AG04450 (cell line): ENCODE measurements at regions of chr6 and their contacts with region 1.

Region 1: DNA sequence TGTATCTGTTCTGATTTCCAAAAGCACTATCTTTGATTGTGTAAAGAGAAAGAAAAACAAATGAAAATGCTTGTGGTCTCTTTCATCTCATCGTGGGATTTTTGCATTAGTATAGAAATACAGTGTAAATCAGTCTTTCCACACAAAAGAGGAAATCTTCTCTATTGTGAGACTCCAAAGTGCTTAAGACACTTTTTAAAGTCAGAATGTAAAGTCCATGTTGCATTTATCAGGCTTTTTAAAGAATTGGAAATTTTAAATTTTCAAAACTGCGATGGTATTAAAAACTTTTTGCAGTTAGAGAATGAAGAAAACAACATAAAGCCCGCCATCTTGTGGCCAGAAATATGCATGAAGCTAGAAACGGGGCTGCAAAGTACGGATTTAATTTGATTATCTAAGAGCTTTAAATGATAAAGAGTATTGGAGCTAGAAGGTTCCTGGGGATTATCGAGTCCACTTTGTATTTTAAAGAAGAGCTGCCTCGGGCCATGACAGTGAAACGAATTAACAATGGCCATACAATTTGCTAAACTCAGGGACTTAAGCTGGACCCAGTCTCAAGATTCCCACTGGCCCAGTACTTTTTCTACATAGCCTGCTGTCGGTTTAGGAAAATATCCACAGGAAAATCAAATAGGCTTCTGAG is 339.6 kb downstream of the ARHGAP18 start:
- DNase-seq: peak; percentile 18
- H3K4me3 ChIP-seq: no peak overlapping the region; the same call in 1 of the 2 replicates
- H3K27ac ChIP-seq: no peak overlapping the region
- H3K27me3 ChIP-seq: no peaks in the 10 kb centered on the region
- CTCF ChIP-seq: peak; percentile 73

Region 2: GRCh38 chr6:128981716-128982115 is 388.7 kb before region 1 on chr6:
- CTCF ChIA-PET with region 1: no interaction called
- POLR2A ChIA-PET with region 1: no interaction called
- DNase-seq: no peak
- H3K4me3 ChIP-seq: no peak overlapping the region
- H3K27ac ChIP-seq: no peak overlapping the region
- H3K27me3 ChIP-seq: no peaks in the 10 kb centered on the region
- CTCF ChIP-seq: no peak

Region 3: DNA sequence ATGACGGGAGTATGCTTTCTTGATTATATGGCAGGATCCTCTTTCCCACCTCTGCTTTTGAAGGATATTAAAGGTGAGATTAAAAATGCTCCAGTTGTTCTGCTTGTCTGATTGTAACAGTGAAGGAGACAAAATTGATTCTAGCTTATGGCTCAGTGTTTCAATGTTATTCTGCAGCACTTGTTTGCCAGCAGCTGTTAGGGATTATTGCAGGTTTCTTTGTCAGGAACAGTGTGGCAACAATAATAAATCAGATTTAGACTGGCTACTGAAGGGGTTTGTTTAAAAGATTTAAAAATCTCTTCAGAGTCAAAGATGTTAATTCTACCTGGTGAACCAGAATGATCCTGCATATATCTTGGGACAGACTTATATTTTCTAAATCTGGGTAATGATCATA is 360.5 kb before region 1 on chr6:
- CTCF ChIA-PET with region 1: no interaction called
- POLR2A ChIA-PET with region 1: no interaction called
- DNase-seq: no peak
- H3K4me3 ChIP-seq: no peak overlapping the region
- H3K27ac ChIP-seq: no peak overlapping the region
- H3K27me3 ChIP-seq: no peaks in the 10 kb centered on the region
- CTCF ChIP-seq: no peak

Region 4: GRCh38 chr6:129251669-129252376 is 118.6 kb before region 1 on chr6:
- CTCF ChIA-PET with region 1: interaction called, 11 read pairs
- POLR2A ChIA-PET with region 1: no interaction called
- DNase-seq: peak; percentile 32
- H3K4me3 ChIP-seq: no peak overlapping the region
- H3K27ac ChIP-seq: no peak overlapping the region
- H3K27me3 ChIP-seq: no peaks in the 10 kb centered on the region
- CTCF ChIP-seq: peak; percentile 86

Region 5: DNA sequence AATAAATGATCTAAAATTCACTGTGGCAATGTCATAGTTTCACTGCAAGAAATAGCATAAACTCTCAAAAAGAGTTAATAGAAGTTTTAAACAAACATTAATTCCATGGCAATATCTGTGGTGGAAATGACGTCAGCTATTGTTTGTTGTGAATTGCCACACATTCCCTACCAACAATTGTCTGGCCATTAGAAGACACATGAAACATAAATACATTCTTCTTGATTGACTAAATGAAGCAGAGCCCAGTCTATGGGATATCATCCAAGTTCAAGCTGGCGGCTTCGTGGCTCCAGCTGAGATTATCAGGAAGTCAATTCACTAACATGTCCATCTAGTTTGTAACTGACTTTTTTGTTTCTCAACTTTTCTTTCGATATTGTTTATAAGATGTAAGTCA is 29.4 kb before region 1 on chr6:
- CTCF ChIA-PET with region 1: interaction called, 12 read pairs
- POLR2A ChIA-PET with region 1: no interaction called
- DNase-seq: peak; percentile 73
- H3K4me3 ChIP-seq: no peak overlapping the region
- H3K27ac ChIP-seq: no peak overlapping the region
- H3K27me3 ChIP-seq: no peaks in the 10 kb centered on the region
- CTCF ChIP-seq: no peak

Region 6: GRCh38 chr6:129359811-129360681 is 10.3 kb before region 1 on chr6:
- CTCF ChIA-PET with region 1: interaction called, 10 read pairs
- POLR2A ChIA-PET with region 1: no interaction called
- DNase-seq: no peak
- H3K4me3 ChIP-seq: no peak overlapping the region
- H3K27ac ChIP-seq: no peak overlapping the region
- H3K27me3 ChIP-seq: no peaks in the 10 kb centered on the region
- CTCF ChIP-seq: no peak